ENCODE measurements at regions of chr21 and their contacts with region 1.

Region 1: DNA sequence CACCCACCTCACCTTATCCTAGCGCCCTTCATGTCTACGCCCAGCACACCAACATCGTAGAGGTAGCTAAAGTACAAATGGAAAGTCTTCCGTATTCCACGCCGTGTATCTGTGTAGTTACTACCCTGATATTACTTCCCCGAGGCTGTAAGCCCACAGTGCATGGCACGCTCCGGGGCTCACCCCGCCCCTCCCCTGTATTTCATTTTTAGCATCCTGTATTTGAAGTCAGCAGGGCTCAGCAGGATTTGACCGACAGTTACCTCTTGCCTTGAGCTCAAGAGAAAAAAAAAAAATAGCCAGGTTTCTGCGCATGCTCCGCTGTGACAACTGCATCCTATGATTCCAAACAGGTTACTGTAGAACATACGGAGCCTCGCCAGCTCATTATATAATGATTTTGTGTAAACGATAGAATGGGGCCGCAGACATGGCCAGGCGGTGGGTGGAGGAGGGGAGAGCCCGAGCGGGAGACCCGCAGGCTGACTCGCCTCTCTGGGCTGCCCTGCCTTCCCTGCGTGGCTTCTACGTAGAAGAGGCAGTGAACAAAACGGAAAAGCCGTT is 1.3 kb downstream of the ABCG1 start:
- DNase-seq: peak; percentile 43 to 91 (median 74)

Region 2: GRCh38 chr21:41726945-41727783 is 493.1 kb before region 1 on chr21:
- intact Hi-C with region 1: no loop called
- DNase-seq: no peak

Region 3: DNA sequence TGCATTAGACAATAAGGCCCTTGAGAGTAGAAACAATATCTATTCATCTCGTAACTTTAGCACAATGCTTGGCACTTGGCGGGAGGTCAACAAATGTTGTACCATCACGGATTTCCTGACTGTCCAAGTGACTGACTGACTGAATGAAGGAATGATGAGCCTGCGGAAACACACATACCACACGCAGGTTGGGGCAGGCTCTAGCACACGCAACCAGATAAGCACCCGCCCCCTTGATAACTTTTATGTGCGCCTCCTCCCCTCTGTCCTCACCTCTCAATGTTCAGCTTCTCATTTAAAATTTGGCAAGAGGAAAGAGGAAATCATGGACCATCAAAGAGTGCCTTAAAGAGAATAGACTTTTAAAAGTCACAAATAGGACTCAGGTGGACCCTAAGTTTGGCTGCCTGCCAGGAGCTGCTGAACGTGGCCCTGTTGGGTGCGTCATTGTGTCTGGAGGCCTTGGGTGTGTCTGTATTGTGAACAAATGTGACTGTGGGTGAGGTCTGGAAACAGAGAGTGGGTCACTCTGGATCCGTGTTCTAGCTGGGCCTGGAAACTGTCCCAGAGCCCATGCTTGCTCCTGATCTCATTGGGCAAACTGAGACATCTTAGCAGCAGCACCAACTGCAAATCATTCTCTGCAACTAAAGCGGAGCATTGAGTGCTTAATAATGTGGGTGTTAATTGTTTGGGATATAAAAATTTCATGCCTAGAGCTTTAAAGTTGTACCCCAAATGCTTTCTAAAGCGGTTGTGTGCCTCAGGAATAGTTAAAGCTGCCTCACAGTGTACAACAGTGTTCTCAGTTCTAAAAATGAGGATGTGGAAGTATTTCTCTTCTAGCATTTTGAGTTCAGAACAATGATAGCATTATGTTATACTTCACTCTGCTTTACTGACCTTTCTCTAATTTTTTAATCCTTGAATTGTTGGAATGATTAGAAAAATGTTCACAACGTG is 48.8 kb before region 1 on chr21:
- intact Hi-C with region 1: loop called (anchors 5 kb)
- DNase-seq: peak in 41 of 42 donors; percentile 41 to 94 (median 82)

Region 4: GRCh38 chr21:42266971-42267556 is 46.8 kb after region 1 on chr21:
- intact Hi-C with region 1: no loop called
- DNase-seq: no peak

Measured in head of caudate nucleus (tissue), 42 donors.